ENCODE measurements at regions of chr14 and their contacts with region 1.

Region 1: GRCh38 chr14:89040460-89041259 is 216.2 kb downstream of the TTC8 start:
- DNase-seq: peak; percentile 92
- H3K4me3 ChIP-seq: peak overlapping the region; percentile 26
- H3K27ac ChIP-seq: peak overlapping the region; percentile 81
- H3K4me1 ChIP-seq: no peaks in the 10 kb centered on the region
- H3K27me3 ChIP-seq: no peaks in the 10 kb centered on the region
- CTCF ChIP-seq: peak; percentile 96

Region 2: GRCh38 chr14:89178802-89179535 is 138.3 kb after region 1 on chr14:
- intact Hi-C with region 1: loop called (anchors 10 kb)
- DNase-seq: no peak
- H3K4me3 ChIP-seq: no peak overlapping the region
- H3K27ac ChIP-seq: no peak overlapping the region
- H3K4me1 ChIP-seq: no peaks in the 10 kb centered on the region
- H3K27me3 ChIP-seq: no peaks in the 10 kb centered on the region
- CTCF ChIP-seq: no peak

Region 3: GRCh38 chr14:89773644-89774316 is 733.1 kb after region 1 on chr14:
- intact Hi-C with region 1: loop called (anchors 5 kb)
- DNase-seq: no peak
- H3K4me3 ChIP-seq: no peak overlapping the region
- H3K27ac ChIP-seq: no peak overlapping the region
- H3K4me1 ChIP-seq: no peaks in the 10 kb centered on the region
- H3K27me3 ChIP-seq: no peaks in the 10 kb centered on the region
- CTCF ChIP-seq: no peak

Region 4: GRCh38 chr14:89915114-89915878 is 874.6 kb after region 1 on chr14:
- intact Hi-C with region 1: loop called (anchors 2 kb)
- DNase-seq: peak; percentile 60
- H3K4me3 ChIP-seq: no peak overlapping the region
- H3K27ac ChIP-seq: no peak overlapping the region
- H3K4me1 ChIP-seq: peaks cover 12% of the 10 kb centered on the region
- H3K27me3 ChIP-seq: no peaks in the 10 kb centered on the region
- CTCF ChIP-seq: peak; percentile 95